Kidney (tissue), 22 donors: ENCODE measurements at regions of chr5 and their contacts with region 1.

Region 1: DNA sequence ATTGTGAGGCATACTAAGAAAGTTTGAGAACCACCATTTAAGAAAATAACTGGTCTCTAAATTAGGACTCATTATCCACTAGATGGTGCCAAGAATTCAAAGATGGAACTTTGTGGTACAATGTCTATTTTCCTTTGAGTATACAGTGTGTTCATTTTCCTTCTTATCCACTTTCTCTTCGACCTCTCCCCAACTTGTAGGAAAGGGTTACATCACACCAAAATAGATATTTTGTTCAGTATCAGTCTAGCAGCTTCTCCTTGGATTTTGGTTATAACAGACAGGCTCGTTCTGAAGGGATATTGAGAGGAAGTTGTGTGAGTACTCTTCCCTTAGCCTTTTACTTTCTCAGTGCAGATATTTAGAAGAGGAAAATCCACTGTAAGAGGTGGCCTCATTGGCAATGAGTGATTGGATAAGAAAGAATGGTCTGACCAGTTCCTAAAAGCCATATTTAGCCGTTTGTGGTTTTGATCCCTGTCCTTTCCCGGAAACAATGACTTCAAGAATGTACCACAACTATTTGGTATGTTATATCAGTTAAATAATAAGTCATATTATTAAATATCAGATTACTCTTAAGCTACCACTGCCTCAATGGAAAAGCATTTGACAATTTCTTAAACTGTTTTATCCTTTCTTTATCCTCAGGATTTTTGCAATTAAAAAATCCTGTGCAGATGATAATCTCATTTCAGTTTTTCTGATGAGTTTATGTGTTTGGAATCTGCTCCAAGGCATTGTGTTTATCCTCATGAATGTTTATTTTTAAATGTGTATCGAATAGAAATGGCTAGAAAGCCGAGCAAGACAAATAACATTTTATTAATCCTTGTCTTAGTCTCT is 69.0 kb upstream of the GRAMD2B start:
- DNase-seq: peak in 2 of 5 donors; percentile 84 to 91
- H3K4me3 ChIP-seq: peak overlapping the region in 2 of 3 donors; percentile 42 to 59
- H3K27ac ChIP-seq: peak overlapping the region; percentile 37 to 57
- H3K4me1 ChIP-seq: peaks cover 3 to 10% (median 4%) of the 10 kb centered on the region in 3 donors
- H3K27me3 ChIP-seq: no peaks in the 10 kb centered on the region
- CTCF ChIP-seq: peak; percentile 55

Region 2: GRCh38 chr5:126536874-126537273 is 182.6 kb after region 1 on chr5:
- intact Hi-C with region 1: loop called (anchors 5 kb)
- DNase-seq: no peak
- H3K4me3 ChIP-seq: no peak overlapping the region
- H3K27ac ChIP-seq: no peak overlapping the region
- H3K4me1 ChIP-seq: peaks cover 3 to 5% (median 3%) of the 10 kb centered on the region in 3 donors
- H3K27me3 ChIP-seq: no peaks in the 10 kb centered on the region
- CTCF ChIP-seq: no peak